Activated naive CD4-positive, alpha-beta T cell treated with anti-CD3 and anti-CD28 coated beads for 36 hours (primary cell): ENCODE measurements at regions of chr5 and their contacts with region 1.

Region 1: GRCh38 chr5:40223884-40224402 is 455.8 kb upstream of the PTGER4 start:
- DNase-seq: peak; percentile 66
- H3K4me3 Mint-ChIP-seq: peak overlapping the region; percentile 31
- H3K27ac Mint-ChIP-seq: peak overlapping the region; percentile 92
- H3K4me1 Mint-ChIP-seq: peaks cover 50% of the 10 kb centered on the region
- H3K27me3 Mint-ChIP-seq: no peaks in the 10 kb centered on the region

Region 2: GRCh38 chr5:39863926-39864552 is 359.9 kb before region 1 on chr5:
- CTCF ChIA-PET with region 1: no interaction called
- intact Hi-C with region 1: no loop called
- DNase-seq: no peak
- H3K4me3 Mint-ChIP-seq: no peak overlapping the region
- H3K27ac Mint-ChIP-seq: no peak overlapping the region
- H3K4me1 Mint-ChIP-seq: no peaks in the 10 kb centered on the region
- H3K27me3 Mint-ChIP-seq: peaks cover 4% of the 10 kb centered on the region

Region 3: DNA sequence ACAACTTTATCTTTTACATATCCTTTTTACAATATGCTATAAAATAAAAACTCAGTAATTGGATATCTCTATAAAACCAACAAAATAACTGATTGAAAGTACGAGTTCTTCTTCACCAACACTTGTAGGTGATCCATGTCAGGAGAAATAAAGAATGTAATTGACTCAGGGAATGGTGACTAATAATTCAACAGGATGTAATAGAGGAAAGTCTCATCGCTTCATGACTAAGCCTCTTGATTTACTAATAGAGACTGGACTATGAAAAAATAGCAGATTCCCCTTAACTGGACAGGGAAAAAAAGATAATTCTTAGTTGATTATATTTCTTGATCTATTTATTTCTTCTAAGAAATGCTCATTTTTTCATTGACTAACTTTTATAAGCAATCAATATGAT is 52.0 kb before region 1 on chr5:
- CTCF ChIA-PET with region 1: no interaction called
- intact Hi-C with region 1: loop called (anchors 1 kb)
- DNase-seq: no peak
- H3K4me3 Mint-ChIP-seq: no peak overlapping the region
- H3K27ac Mint-ChIP-seq: no peak overlapping the region
- H3K4me1 Mint-ChIP-seq: peaks cover 6% of the 10 kb centered on the region
- H3K27me3 Mint-ChIP-seq: no peaks in the 10 kb centered on the region

Region 4: GRCh38 chr5:40210694-40211093 is 13.2 kb before region 1 on chr5:
- CTCF ChIA-PET with region 1: interaction called, 3 read pairs
- intact Hi-C with region 1: loop called (anchors 1 kb)
- DNase-seq: no peak
- H3K4me3 Mint-ChIP-seq: no peak overlapping the region
- H3K27ac Mint-ChIP-seq: peak overlapping the region; percentile 98
- H3K4me1 Mint-ChIP-seq: peaks cover 63% of the 10 kb centered on the region
- H3K27me3 Mint-ChIP-seq: no peaks in the 10 kb centered on the region

Region 5: GRCh38 chr5:40240111-40240510 is 16.2 kb after region 1 on chr5:
- CTCF ChIA-PET with region 1: no interaction called
- intact Hi-C with region 1: loop called (anchors 1 kb)
- DNase-seq: peak; percentile 77
- H3K4me3 Mint-ChIP-seq: no peak overlapping the region
- H3K27ac Mint-ChIP-seq: no peak overlapping the region
- H3K4me1 Mint-ChIP-seq: peaks cover 15% of the 10 kb centered on the region
- H3K27me3 Mint-ChIP-seq: no peaks in the 10 kb centered on the region

Region 6: GRCh38 chr5:40333459-40334244 is 109.7 kb after region 1 on chr5:
- CTCF ChIA-PET with region 1: no interaction called
- intact Hi-C with region 1: loop called (anchors 1 kb)
- DNase-seq: peak; percentile 63
- H3K4me3 Mint-ChIP-seq: no peak overlapping the region
- H3K27ac Mint-ChIP-seq: peak overlapping the region; percentile 41
- H3K4me1 Mint-ChIP-seq: peaks cover 15% of the 10 kb centered on the region
- H3K27me3 Mint-ChIP-seq: peaks cover 3% of the 10 kb centered on the region

Region 7: GRCh38 chr5:40404613-40405012 is 180.7 kb after region 1 on chr5:
- CTCF ChIA-PET with region 1: no interaction called
- intact Hi-C with region 1: loop called (anchors 1 kb)
- DNase-seq: no peak
- H3K4me3 Mint-ChIP-seq: peak overlapping the region; percentile 33
- H3K27ac Mint-ChIP-seq: peak overlapping the region; percentile 99
- H3K4me1 Mint-ChIP-seq: peaks cover 89% of the 10 kb centered on the region
- H3K27me3 Mint-ChIP-seq: no peaks in the 10 kb centered on the region

Region 8: DNA sequence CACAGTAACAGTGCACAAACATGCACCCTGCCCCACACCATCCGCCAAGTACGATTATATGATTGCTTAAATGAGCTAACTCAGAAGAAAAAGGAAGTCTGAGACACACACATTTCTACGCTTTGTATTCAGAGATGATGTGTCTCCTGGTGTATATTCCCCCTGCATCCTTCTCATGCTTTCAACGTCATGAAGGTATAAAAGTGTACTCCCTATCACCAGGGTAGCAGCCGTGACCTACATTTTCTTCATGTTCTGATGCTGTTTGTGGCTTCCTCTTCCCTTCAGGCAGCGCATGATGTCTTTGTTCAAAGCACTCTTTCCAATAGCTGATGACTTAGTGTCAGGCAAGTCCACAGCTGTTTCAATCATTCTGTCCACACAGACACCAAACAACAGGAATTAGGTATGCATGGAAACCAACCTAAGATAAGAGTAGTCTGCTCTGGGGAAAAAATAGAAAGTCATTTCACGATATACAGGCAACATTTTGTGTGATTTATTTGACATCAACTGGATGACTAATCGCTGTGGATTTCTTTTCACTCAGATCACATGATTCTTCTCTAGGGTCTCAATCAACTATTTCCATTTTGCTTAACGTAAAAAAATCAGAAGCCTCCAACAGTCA is 186.4 kb after region 1 on chr5:
- CTCF ChIA-PET with region 1: interaction called, 3 read pairs
- intact Hi-C with region 1: loop called (anchors 1 kb)
- DNase-seq: peak; percentile 88
- H3K4me3 Mint-ChIP-seq: peak overlapping the region; percentile 58
- H3K27ac Mint-ChIP-seq: peak overlapping the region; percentile 98
- H3K4me1 Mint-ChIP-seq: peaks cover 64% of the 10 kb centered on the region
- H3K27me3 Mint-ChIP-seq: no peaks in the 10 kb centered on the region